GM12878 (cell line): ENCODE measurements at regions of chrX and their contacts with region 1.

Region 1: GRCh38 chrX:110304884-110305283 is 13.0 kb downstream of the AMMECR1 start:
- DNase-seq: no peak
- ATAC-seq: no peak
- H3K4me3 ChIP-seq: no peak overlapping the region
- H3K27ac ChIP-seq: no peak overlapping the region
- H3K4me1 ChIP-seq: no peaks in the 10 kb centered on the region
- H3K27me3 ChIP-seq: no peaks in the 10 kb centered on the region
- CTCF ChIP-seq: no peak
- EP300 ChIP-seq: no peak
- POLR2A ChIP-seq: no peak
- RAD21 ChIP-seq: no peak

Region 2: GRCh38 chrX:110293658-110294057 is 11.2 kb before region 1 on chrX:
- CTCF ChIA-PET with region 1: no interaction called
- POLR2A ChIA-PET with region 1: no interaction called
- RAD21 ChIA-PET with region 1: no interaction called
- SMC1A ChIA-PET with region 1: interaction called, 20 read pairs
- in situ Hi-C with region 1: no loop called
- intact Hi-C with region 1: no loop called
- DNase-seq: no peak
- ATAC-seq: no peak
- H3K4me3 ChIP-seq: no peak overlapping the region
- H3K27ac ChIP-seq: no peak overlapping the region
- H3K4me1 ChIP-seq: no peaks in the 10 kb centered on the region
- H3K27me3 ChIP-seq: no peaks in the 10 kb centered on the region
- CTCF ChIP-seq: no peak
- EP300 ChIP-seq: no peak
- POLR2A ChIP-seq: no peak
- RAD21 ChIP-seq: no peak

Region 3: DNA sequence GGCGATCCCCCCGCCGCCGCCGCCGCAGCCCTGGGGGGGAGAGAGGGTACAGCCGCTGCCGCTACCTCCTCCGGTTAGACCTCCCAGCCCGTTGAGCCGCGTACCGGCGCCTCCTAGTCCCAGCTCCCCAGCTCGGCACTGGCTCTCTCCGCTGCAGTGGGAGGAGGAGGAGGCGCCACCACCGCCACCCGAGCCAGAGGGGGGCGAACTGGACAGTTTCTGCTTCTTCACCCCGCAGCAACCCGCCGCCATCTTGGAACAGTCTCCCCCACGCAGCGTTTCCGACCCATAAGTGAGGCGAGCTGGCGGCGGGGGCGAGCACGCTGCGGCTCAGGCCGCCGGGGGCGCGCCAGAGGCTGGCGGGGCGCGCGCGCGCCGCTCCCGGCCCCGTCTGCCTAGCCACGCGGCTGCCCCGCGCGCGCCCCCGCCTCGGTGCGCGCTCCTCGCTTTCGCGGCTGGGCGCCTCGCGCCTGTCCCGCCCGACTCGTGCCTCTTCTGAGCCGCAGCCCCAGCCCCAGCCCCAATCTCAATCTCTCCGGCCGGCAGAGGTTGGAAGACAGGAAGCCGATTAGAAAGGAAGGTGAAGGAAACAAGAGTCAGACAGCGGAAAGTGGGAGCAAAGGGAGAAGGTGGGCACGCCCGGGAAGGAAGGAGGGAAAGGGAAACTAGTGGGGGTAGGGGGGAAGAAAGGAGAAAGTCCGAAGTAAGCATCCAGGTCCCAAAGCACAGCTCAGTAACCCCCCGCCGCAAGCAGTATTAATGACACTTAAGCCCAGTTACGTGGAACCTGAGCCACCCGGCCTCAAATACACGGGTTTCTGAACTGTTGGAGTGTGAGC is 13.2 kb after region 1 on chrX and contains the start of gene AMMECR1:
- CTCF ChIA-PET with region 1: interaction called, 4 read pairs
- POLR2A ChIA-PET with region 1: interaction called, 4 read pairs
- RAD21 ChIA-PET with region 1: no interaction called
- SMC1A ChIA-PET with region 1: interaction called, 10 read pairs
- in situ Hi-C with region 1: no loop called
- intact Hi-C with region 1: no loop called
- DNase-seq: no peak
- ATAC-seq: peak; percentile 73
- H3K4me3 ChIP-seq: peak within 1 kb of the TSS; percentile 79
- H3K27ac ChIP-seq: peak within 1 kb of the TSS; percentile 75
- H3K4me1 ChIP-seq: no peaks in the 10 kb centered on the region; the same call in 1 of the 2 replicates
- H3K27me3 ChIP-seq: no peaks in the 10 kb centered on the region
- CTCF ChIP-seq: no peak
- EP300 ChIP-seq: no peak
- POLR2A ChIP-seq: peak; percentile 91
- RAD21 ChIP-seq: no peak
- polyA plus RNA-seq, gene AMMECR1: 4.9 to 6.4 TPM

Region 4: DNA sequence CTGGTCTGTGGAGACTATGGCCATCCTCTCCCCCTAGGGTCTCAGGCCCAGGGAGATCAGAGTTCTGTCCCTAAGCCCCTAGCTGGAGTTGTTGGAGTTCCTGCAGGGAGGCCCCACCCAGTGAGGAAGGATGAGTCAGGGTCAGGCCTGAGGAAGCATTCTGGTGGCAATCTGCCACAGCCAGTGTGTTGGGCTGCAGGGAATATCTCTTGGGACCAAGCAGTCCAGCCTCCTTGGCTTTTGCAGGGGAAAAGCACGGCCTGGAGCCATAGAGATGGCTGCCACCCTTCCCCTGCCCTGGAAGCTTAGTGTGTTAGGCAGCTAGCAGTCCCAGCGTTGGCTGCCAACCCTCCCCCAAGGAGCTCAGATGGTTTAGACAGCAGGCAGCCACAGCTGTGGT is 256.1 kb after region 1 on chrX:
- CTCF ChIA-PET with region 1: no interaction called
- POLR2A ChIA-PET with region 1: no interaction called
- RAD21 ChIA-PET with region 1: no interaction called
- SMC1A ChIA-PET with region 1: no interaction called
- in situ Hi-C with region 1: no loop called
- intact Hi-C with region 1: no loop called
- DNase-seq: no peak
- ATAC-seq: no peak
- H3K4me3 ChIP-seq: no peak overlapping the region
- H3K27ac ChIP-seq: no peak overlapping the region
- H3K4me1 ChIP-seq: no peaks in the 10 kb centered on the region
- H3K27me3 ChIP-seq: no peaks in the 10 kb centered on the region
- CTCF ChIP-seq: no peak
- EP300 ChIP-seq: no peak
- POLR2A ChIP-seq: no peak
- RAD21 ChIP-seq: no peak